Right ventricle myocardium inferior (tissue), 1 donor: ENCODE measurements at regions of chr2 and their contacts with region 1.

Region 1: DNA sequence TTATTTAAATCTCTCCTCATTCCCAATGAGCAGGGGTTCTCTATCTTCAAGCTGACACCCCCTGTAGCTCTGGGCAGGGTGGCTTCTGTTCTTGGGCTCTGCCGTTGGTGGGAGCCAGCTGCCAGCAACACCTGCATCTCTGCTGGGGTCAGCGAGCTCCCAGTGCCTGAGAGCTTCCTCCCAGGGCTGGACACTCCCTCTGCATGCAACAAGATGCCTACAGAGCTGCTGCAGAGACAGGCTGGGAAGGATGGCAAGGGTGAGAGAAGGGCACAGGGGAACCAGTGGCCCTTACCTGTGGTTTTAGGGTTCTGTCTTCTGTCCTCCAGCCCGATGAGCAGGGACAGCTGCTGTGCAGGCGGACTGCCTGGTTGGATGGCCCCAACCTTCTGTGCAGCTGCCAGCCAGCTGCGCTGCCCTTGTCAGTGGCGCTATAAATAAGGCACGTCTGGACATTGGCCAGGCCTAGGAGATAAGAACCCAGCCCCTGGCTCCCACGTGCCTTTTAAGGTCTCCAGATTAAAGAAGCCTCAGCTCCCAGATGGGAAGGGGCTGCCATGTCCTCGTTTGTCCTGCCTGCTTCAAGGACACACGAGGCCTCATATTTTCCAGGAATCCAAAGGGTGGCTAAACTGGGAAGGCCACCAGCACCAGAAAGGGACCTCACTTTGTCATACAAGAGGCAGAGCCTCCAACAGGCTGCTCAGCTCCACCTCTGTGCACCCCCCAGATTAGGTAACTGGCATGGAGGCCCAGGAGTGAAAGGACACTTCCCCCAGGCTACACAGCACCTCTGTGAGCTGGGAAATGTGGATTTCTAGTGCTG is 39.5 kb upstream of the FHL2 start:
- DNase-seq: peak; percentile 70
- ATAC-seq: peak; percentile 84

Region 2: DNA sequence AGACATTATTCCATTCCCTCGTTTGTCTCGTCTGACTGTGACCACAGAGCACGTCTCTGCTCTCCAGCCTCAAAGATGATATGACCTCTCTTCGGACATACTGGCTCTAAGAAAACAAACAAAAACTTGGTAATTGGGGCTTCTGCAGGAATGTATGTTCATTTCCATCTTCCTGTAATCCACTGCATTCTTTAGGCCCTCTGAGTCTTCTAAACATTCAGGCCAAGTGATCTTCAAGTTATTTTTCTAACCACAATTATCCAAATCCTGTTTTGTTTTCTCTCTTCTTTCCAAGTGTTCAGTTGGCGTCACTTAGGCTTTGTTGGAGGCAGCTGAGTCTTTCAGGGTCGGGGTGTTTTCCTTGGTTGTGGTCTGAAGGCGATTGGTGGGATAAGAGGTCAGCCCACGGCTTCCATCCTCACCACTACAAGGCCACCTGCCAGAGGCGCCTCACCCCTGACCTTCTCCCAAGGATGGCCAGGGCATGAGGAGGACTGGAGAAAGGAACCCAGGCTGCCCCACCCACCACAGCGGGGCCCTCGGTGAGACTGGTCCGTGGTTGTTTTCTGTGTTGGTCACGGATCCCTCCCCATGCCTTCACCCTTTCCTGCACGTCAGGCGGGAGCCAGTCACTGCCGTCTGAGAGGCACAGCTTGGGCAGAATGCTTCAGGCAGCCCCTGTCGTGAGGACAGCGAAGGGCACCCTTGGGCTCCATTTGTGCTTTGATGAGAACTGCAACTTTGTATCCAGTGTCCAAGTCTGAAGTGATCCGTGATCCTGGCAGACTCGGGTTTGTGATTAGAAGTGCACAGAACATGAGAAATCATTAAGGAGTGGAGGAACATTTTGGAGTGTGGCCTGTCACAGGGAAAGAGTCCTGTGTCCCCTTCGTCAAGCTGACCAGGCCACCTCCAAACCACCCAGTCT is 49.1 kb after region 1 on chr2:
- intact Hi-C with region 1: loop called (anchors 2 kb)
- DNase-seq: no peak
- ATAC-seq: peak; percentile 75

Region 3: DNA sequence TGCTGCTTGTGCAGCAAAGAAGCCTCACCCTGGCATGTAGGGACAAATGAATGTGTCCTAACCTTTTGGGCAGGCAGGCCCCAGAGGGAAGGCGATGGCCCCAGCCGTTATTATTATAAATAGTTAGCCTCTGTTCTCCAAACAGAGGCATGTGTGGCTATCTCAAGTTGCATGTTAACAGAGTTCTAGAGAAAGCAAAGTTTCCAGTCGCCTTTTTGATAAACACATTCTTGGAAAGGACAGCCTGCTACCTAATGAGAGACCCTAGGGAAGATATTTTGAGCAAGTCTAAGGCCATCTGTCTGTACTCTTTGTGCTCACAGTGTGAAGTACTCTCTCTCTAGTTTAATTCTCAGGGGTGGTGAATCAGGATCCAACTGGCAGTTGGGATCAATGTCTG is 58.0 kb after region 1 on chr2:
- intact Hi-C with region 1: loop called (anchors 2 kb)
- DNase-seq: no peak
- ATAC-seq: peak; percentile 83

Region 4: GRCh38 chr2:105521205-105521604 is 82.9 kb after region 1 on chr2:
- intact Hi-C with region 1: loop called (anchors 1 kb)
- DNase-seq: no peak
- ATAC-seq: no peak